Psoas muscle (tissue), 8 donors: ENCODE measurements at regions of chr6 and their contacts with region 1.

Region 1: DNA sequence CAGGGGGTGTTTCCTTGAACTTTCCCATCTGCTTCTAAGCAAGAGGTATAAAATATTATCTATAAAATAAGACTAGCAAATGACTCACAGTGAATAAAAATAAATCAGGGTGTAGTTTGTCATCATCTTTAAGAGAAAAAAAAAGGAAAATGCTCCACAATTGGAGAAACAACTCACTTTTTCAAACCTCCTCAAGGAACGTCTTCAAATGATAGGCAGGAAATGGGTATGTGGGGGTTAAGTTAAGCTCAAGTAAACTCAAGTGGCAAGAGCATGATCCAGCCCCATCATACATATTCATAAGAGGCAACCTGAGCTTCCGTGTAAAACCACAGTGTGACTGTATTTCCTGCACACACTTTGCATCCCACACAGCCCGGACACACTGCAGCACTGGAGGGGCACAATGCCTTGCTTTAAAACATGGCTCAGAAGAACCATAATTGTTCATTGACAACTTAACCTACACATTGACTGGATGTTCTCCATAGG is 58.5 kb upstream of the CEP85L start:
- DNase-seq: no peak
- ATAC-seq: peak; percentile 33 to 80 (median 52)
- H3K4me3 ChIP-seq: peak overlapping the region; percentile 63
- H3K27ac ChIP-seq: peak overlapping the region; percentile 83
- H3K4me1 ChIP-seq: peaks cover 32% of the 10 kb centered on the region
- H3K27me3 ChIP-seq: no peaks in the 10 kb centered on the region
- CTCF ChIP-seq: no peak

Region 2: GRCh38 chr6:118651282-118652050 is 58.4 kb before region 1 on chr6 and contains the start of gene CEP85L:
- intact Hi-C with region 1: loop called in 1 of 2 experiments (anchors 5 kb)
- DNase-seq: peak; percentile 94 to 96
- ATAC-seq: peak; percentile 95 to 97 (median 96)
- H3K4me3 ChIP-seq: peak within 1 kb of the TSS; percentile 97
- H3K27ac ChIP-seq: peak within 1 kb of the TSS; percentile 99
- H3K4me1 ChIP-seq: peaks cover 16% of the 10 kb centered on the region
- H3K27me3 ChIP-seq: no peaks in the 10 kb centered on the region
- CTCF ChIP-seq: no peak
- total RNA-seq, gene CEP85L: 18.9 to 25.1 (median 21.9) TPM

Region 3: DNA sequence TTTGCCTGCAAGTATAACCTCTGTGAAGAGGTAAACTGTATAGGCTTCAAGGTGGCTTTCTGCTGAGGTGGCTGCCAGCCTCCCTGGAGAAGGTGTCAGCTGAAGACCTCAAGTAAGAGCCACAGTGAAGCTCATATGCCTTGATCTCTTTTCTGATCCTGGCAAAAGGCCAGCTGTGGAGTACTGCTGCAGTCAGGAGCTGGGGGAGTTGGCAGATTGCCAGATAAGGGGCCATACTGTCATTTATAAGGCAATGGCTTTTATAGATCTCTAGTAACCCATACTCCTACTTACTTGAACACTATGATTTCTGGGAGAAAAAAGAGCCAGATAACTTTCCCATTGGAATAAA is 49.7 kb before region 1 on chr6:
- intact Hi-C with region 1: loop called (anchors 5 kb)
- DNase-seq: no peak
- ATAC-seq: peak; percentile 13 to 67 (median 50)
- H3K4me3 ChIP-seq: no peak overlapping the region
- H3K27ac ChIP-seq: peak overlapping the region; percentile 59
- H3K4me1 ChIP-seq: peaks cover 28% of the 10 kb centered on the region
- H3K27me3 ChIP-seq: no peaks in the 10 kb centered on the region
- CTCF ChIP-seq: no peak

Region 4: DNA sequence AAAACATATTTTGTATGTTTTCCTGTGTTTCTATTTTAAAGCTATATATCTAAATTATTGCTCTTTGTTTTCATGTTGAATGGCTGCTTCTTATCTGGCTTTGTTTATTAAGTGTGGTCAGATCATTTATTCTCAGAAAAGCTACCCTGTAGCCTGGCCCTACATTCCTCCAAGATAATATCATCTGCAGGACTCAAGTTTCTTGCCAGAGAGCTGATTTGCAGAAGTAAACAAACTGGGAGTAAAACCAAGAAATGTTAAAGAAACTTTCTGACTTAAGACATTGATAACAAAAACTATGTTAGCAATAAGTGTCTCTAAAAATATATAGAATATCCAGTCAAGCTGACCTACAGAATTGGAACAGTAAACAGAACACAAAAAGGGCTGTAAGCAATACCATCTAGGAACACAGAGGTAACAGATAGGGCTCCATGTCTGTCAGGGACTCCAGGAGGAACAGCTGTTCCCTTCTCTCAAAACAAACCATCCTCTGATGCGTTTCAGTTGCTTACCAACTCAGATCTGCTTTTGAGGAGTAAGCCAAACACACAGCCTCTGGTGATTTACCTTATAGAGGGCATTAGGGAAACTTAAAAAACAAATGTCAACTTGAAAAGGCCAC is 41.0 kb before region 1 on chr6:
- intact Hi-C with region 1: loop called (anchors 5 kb)
- DNase-seq: no peak
- ATAC-seq: peak; percentile 93 to 96 (median 93)
- H3K4me3 ChIP-seq: peak overlapping the region; percentile 23
- H3K27ac ChIP-seq: peak overlapping the region; percentile 84
- H3K4me1 ChIP-seq: peaks cover 49% of the 10 kb centered on the region
- H3K27me3 ChIP-seq: no peaks in the 10 kb centered on the region
- CTCF ChIP-seq: no peak

Region 5: GRCh38 chr6:118674775-118675174 is 35.1 kb before region 1 on chr6:
- intact Hi-C with region 1: loop called (anchors 5 kb)
- DNase-seq: no peak
- ATAC-seq: peak in 1 of 4 donors; percentile 27
- H3K4me3 ChIP-seq: no peak overlapping the region
- H3K27ac ChIP-seq: no peak overlapping the region
- H3K4me1 ChIP-seq: peaks cover 12% of the 10 kb centered on the region
- H3K27me3 ChIP-seq: no peaks in the 10 kb centered on the region
- CTCF ChIP-seq: no peak

Region 6: GRCh38 chr6:118748311-118749062 is 38.6 kb after region 1 on chr6:
- intact Hi-C with region 1: loop called in 1 of 2 experiments (anchors 5 kb)
- DNase-seq: peak; percentile 69 to 85
- ATAC-seq: peak; percentile 74 to 83 (median 82)
- H3K4me3 ChIP-seq: peak overlapping the region; percentile 37
- H3K27ac ChIP-seq: peak overlapping the region; percentile 81
- H3K4me1 ChIP-seq: peaks cover 43% of the 10 kb centered on the region
- H3K27me3 ChIP-seq: no peaks in the 10 kb centered on the region
- CTCF ChIP-seq: no peak

Region 7: DNA sequence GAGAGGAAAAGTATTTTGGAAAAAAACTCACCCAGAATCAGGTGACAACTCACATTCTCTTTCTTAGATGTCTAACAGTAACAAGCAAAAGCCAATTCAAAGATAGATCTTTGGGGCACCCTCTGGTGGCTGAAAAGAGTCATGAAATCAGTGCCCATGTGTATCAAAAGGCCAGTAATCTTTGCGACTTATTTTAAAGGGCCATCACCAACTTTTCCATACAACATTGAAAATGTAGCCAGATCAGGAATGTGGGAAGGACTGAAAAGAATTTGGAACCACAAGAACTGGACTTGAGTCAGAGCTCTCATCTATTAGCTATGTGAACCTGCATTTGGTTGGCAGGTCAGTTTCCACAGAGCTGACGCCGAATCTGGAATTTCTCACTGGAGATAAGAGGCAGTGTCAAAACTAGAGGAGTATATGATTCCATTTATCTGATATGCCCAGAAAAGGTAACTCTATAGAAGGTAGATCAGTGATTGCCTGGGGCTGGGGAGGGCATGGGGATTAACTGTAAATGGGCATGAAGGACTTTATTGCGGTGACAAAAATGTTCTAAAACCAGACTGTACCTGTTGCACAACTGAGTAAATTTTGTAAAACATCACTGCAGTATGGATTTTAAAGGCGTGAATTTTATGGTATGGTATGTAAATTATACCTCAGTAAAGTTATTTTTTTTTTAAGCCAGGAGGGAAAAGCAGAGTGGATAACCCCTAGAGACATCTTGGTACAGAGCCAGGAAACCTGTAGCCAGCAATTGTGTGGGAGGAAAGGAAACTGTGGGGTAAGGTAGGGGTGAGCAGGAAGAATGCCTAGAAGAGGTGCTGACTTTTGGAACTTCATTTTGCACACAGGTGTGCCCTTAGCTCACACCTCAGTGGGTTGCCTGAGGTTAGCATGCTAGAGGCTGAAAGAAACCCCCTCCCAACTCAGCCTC is 67.0 kb after region 1 on chr6:
- intact Hi-C with region 1: loop called in 1 of 2 experiments (anchors 1 kb)
- DNase-seq: peak; percentile 33 to 62
- ATAC-seq: peak; percentile 85 to 97 (median 87)
- H3K4me3 ChIP-seq: peak overlapping the region; percentile 51
- H3K27ac ChIP-seq: no peak overlapping the region
- H3K4me1 ChIP-seq: peaks cover 13% of the 10 kb centered on the region
- H3K27me3 ChIP-seq: no peaks in the 10 kb centered on the region
- CTCF ChIP-seq: peak; percentile 84